K562 (cell line): ENCODE measurements at regions of chr7 and their contacts with region 1.

Region 1: GRCh38 chr7:123787220-123788007 is 38.6 kb upstream of the WASL start:
- DNase-seq: peak in 1 of 4 experiments; percentile 28
- ATAC-seq: peak; percentile 40
- H3K4me3 ChIP-seq: no peak overlapping the region
- H3K27ac ChIP-seq: peak overlapping the region; percentile 9; the same call in 1 of the 3 replicates
- H3K4me1 ChIP-seq: peaks cover 0 to 25% of the 10 kb centered on the region in 2 experiments; a peak in 2 of 5 replicates
- H3K27me3 ChIP-seq: no peaks in the 10 kb centered on the region
- CTCF ChIP-seq: no peak
- EP300 ChIP-seq: no peak
- POLR2A ChIP-seq: no peak
- RAD21 ChIP-seq: no peak

Region 2: DNA sequence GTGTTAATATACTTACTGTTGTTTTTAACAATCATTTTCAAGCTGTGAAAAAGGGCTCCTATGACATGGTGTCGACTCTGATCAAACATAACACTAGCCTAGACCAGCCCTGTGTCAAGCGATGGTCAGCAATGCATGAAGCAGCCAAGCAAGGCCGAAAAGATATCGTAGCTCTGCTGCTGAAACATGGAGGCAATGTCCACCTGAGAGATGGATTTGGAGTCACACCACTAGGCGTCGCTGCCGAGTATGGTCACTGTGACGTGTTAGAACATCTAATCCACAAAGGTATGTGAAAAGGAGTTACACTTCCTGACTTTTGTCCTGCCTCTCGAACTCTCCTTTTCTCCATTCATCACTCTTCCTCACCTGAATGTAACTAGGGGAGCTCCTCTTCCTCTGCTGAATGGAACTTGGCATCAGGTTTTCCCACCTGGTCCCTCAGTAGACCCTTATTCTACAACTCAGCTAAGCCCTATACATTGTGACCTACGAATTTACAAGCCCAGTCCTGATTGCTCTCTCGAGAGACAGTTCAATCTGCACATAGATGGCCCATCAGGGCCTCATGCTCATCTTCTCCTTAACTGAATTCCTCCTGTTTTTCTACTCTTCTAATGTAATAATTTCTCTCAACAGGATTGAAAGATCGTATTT is 162.8 kb before region 1 on chr7:
- CTCF ChIA-PET with region 1: no interaction called
- POLR2A ChIA-PET with region 1: no interaction called
- in situ Hi-C with region 1: no loop called
- intact Hi-C with region 1: no loop called
- DNase-seq: peak; percentile 76 to 93 (median 78)
- ATAC-seq: peak; percentile 91
- H3K4me3 ChIP-seq: no peak overlapping the region
- H3K27ac ChIP-seq: peak overlapping the region; percentile 11; the same call in 1 of the 3 replicates
- H3K4me1 ChIP-seq: peaks cover 0 to 6% of the 10 kb centered on the region in 2 experiments; a peak in 2 of 5 replicates
- H3K27me3 ChIP-seq: no peaks in the 10 kb centered on the region; a peak in 1 of 5 replicates
- CTCF ChIP-seq: peak; percentile 92 to 99 (median 97)
- EP300 ChIP-seq: 0 out of 2 replicates have a peak, but pooled peaks have one; percentile 29
- POLR2A ChIP-seq: no peak
- RAD21 ChIP-seq: peak; percentile 54 to 85

Region 3: GRCh38 chr7:123712619-123713018 is 74.8 kb before region 1 on chr7:
- CTCF ChIA-PET with region 1: no interaction called
- POLR2A ChIA-PET with region 1: no interaction called
- in situ Hi-C with region 1: no loop called
- intact Hi-C with region 1: loop called (anchors 5 kb)
- DNase-seq: no peak
- ATAC-seq: peak; percentile 43
- H3K4me3 ChIP-seq: no peak overlapping the region
- H3K27ac ChIP-seq: peak overlapping the region; percentile 13; the same call in 2 of the 3 replicates
- H3K4me1 ChIP-seq: peaks cover 0 to 54% of the 10 kb centered on the region in 2 experiments; a peak in 4 of 5 replicates
- H3K27me3 ChIP-seq: no peaks in the 10 kb centered on the region
- CTCF ChIP-seq: no peak
- EP300 ChIP-seq: no peak
- POLR2A ChIP-seq: no peak
- RAD21 ChIP-seq: no peak